SK-N-SH (cell line): ENCODE measurements at regions of chr16 and their contacts with region 1.

Region 1: DNA sequence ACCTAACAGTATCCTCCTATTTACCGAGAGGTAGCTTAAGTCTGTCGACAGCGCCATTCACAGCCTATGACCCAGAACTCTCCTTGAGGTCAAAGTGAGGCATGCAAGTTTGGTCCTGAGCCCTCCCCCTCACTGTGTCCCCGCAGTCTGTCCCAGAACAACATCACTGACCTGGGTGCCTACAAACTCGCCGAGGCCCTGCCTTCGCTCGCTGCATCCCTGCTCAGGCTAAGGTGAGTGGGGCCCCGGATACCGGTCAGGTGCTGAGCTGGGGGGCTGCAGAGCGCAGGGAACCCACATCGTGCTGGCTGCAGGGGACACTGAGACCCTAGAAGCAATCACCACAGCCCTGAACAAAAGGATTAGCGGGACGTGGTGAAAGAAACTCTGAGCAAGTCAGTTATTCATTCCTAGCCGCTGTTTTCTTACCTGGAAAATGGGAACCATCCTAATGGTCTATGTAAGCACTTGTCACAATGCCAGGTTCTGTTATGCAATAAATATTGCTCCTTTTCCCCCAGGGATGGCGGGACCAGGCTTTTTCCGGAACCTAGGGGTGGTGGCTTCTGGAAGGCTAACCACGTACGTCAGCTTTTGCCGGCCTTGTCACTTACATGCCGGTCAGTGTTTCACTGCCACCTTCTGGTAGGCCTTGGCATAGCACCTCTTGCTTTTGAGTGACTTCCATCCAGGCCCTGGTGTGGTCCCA is 23.8 kb downstream of the DEXI start:
- DNase-seq: peak; percentile 88
- H3K4me3 ChIP-seq: peak overlapping the region in 1 of 2 experiments; percentile 51; a peak in 1 of 4 replicates
- H3K27ac ChIP-seq: no peak overlapping the region
- H3K4me1 ChIP-seq: peaks cover 0 to 13% of the 10 kb centered on the region in 2 experiments; a peak in 1 of 4 replicates
- H3K27me3 ChIP-seq: no peaks in the 10 kb centered on the region
- CTCF ChIP-seq: peak; percentile 94
- EP300 ChIP-seq: no peak
- RAD21 ChIP-seq: peak; percentile 95

Region 2: DNA sequence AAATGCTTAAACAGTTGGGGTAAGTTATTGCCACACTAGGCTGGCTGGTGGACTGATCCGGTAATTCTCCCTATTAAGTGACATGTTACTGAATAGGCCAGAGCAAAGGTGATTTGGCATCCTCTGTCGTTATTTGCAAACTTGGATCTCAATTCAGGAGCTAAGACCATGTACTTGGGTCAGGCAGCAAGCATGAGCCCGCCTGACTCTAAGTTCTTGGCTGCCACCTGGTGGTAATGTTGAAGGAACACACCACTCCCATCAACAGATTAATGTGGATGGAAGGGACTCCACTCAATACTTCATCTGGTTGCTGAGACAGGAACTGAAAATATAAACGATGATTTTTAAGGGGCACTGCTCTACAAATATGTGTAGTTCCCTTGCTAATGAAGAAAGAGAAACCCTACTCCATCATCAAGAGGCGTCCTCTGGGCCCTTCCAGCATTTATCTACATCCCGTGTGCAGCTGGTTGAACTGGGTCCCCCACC is 408.9 kb before region 1 on chr16:
- CTCF ChIA-PET with region 1: interaction called, 30 read pairs
- POLR2A ChIA-PET with region 1: no interaction called
- DNase-seq: peak; percentile 77
- H3K4me3 ChIP-seq: peak overlapping the region in 1 of 2 experiments; percentile 21; a peak in 1 of 4 replicates
- H3K27ac ChIP-seq: no peak overlapping the region
- H3K4me1 ChIP-seq: no peaks in the 10 kb centered on the region; a peak in 1 of 4 replicates
- H3K27me3 ChIP-seq: no peaks in the 10 kb centered on the region
- CTCF ChIP-seq: peak; percentile 78
- EP300 ChIP-seq: no peak
- RAD21 ChIP-seq: peak; percentile 96

Region 3: GRCh38 chr16:10737068-10737625 is 181.3 kb before region 1 on chr16:
- CTCF ChIA-PET with region 1: interaction called, 38 read pairs
- POLR2A ChIA-PET with region 1: no interaction called
- DNase-seq: peak; percentile 70
- H3K4me3 ChIP-seq: no peak overlapping the region; a peak in 1 of 4 replicates
- H3K27ac ChIP-seq: no peak overlapping the region
- H3K4me1 ChIP-seq: peaks cover 0 to 15% of the 10 kb centered on the region in 2 experiments; a peak in 1 of 4 replicates
- H3K27me3 ChIP-seq: no peaks in the 10 kb centered on the region
- CTCF ChIP-seq: peak; percentile 96
- EP300 ChIP-seq: no peak
- RAD21 ChIP-seq: peak; percentile 97

Region 4: GRCh38 chr16:10752843-10753523 is 165.5 kb before region 1 on chr16:
- CTCF ChIA-PET with region 1: interaction called, 29 read pairs
- POLR2A ChIA-PET with region 1: no interaction called
- DNase-seq: no peak
- H3K4me3 ChIP-seq: no peak overlapping the region
- H3K27ac ChIP-seq: no peak overlapping the region
- H3K4me1 ChIP-seq: peaks cover 22 to 23% of the 10 kb centered on the region in 2 experiments; a peak in 2 of 4 replicates
- H3K27me3 ChIP-seq: no peaks in the 10 kb centered on the region
- CTCF ChIP-seq: no peak
- EP300 ChIP-seq: no peak
- RAD21 ChIP-seq: no peak

Region 5: GRCh38 chr16:10907757-10908045 is 10.7 kb before region 1 on chr16:
- CTCF ChIA-PET with region 1: interaction called, 24 read pairs
- POLR2A ChIA-PET with region 1: no interaction called
- DNase-seq: no peak
- H3K4me3 ChIP-seq: no peak overlapping the region
- H3K27ac ChIP-seq: no peak overlapping the region
- H3K4me1 ChIP-seq: no peaks in the 10 kb centered on the region
- H3K27me3 ChIP-seq: 0 out of 2 replicates have a peak, but pooled peaks cover 6% of the 10 kb centered on the region
- CTCF ChIP-seq: no peak
- EP300 ChIP-seq: no peak
- RAD21 ChIP-seq: no peak

Region 6: DNA sequence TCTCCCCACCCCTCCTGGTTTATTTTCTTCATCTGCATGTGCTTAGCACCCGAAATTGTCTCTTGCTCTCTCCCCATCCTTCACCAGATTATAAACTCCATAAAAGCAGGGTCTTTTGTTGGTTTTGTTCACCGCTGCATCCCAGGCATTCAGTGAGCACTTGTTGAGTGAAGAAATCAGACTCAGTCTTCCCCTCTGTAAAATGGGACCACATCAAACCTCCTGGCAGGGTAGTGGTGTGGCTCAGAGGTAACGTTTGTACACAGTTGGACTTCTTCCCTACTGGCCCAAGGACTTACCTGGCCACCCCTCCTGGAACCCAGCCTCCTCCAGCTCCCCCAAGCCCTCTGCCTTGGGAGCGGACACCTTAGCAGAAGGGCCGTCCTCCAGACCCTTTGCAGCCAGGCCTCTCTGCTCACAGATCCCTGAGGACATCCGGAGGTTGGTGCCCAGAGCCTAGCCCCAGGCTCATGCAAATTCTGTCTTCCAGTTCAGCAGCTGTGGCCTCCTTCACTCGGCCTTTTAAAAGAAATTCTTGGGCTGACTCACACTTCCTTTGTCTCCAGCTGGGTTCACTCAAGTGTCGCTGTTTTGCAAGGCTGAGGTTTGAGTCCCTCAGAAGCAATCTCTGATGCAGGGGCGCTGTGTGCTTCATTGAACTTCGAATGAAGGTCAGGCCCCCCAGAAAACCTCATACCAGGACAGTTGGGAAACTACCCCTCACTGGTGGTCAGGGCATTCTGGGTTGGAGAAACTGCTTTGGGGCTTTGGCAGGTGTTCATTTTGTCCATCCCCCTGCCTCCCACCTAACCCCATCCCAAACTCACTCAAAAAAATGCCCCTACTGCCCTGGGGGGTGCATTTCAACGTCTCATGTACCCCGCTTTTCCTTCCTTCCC is 410.0 kb after region 1 on chr16:
- CTCF ChIA-PET with region 1: no interaction called
- POLR2A ChIA-PET with region 1: no interaction called
- DNase-seq: no peak
- H3K4me3 ChIP-seq: peak overlapping the region; percentile 1 to 20; a peak in 2 of 4 replicates
- H3K27ac ChIP-seq: peak overlapping the region; percentile 65 to 70
- H3K4me1 ChIP-seq: peaks cover 0 to 18% of the 10 kb centered on the region in 2 experiments; a peak in 3 of 4 replicates
- H3K27me3 ChIP-seq: no peaks in the 10 kb centered on the region
- CTCF ChIP-seq: peak; percentile 34; the same call in 1 of the 2 replicates
- EP300 ChIP-seq: peak in 1 of 2 experiments; percentile 80; a peak in 1 of 4 replicates
- RAD21 ChIP-seq: no peak